CD8-positive, alpha-beta memory T cell (primary cell): ENCODE measurements at regions of chr10 and their contacts with region 1.

Region 1: DNA sequence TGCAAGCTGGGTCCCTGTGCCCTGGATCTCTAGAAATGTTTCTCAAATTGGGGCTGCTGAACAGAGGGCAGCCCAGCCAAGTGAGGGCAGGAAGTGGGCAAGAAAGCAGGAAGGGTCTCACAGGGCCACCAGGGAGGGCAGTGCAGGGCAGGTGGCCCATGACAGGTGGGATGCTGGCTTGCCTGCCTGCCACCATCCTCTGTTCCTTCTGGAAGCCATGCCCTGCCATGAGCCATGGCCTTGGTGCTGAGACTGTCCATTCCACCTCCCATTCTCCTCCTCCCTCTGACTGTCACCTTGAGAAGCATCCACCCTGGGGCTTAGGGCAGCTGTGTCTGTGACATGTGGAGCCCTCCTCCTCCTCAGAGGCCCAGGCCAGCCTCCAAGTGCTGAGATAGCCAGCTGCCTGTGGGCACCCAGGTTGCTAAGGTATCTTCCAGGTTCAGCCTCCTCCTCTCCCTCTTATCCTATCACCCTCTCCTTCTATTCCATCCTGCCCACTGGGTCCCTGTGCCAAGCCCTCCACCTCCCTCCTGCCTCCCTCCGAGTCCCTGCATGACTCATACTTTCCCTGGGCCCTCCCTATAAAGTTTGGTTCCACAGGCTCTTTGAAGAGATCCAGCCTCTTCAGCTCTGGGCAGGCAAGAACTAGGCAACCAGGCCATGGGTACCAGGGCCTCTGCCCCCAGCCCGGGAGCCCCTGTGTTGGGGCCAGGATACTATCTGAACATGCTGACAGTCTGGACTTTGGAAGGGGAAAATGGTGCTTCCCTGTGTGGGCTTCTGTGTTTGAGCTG is 1.3 kb downstream of the VSIR start:
- DNase-seq: peak in 2 of 5 donors; percentile 40 to 55
- H3K4me3 ChIP-seq: peak overlapping the region; percentile 94
- H3K4me3 Mint-ChIP-seq: peak overlapping the region; percentile 79 to 98 (median 92)
- H3K27ac ChIP-seq: peak overlapping the region; percentile 80
- H3K27ac Mint-ChIP-seq: peak overlapping the region; percentile 90 to 98 (median 94)
- H3K4me1 ChIP-seq: peaks cover 81% of the 10 kb centered on the region
- H3K4me1 Mint-ChIP-seq: peaks cover 76 to 88% (median 83%) of the 10 kb centered on the region in 3 donors
- H3K27me3 ChIP-seq: no peaks in the 10 kb centered on the region
- H3K27me3 Mint-ChIP-seq: no peaks in the 10 kb centered on the region

Region 2: GRCh38 chr10:70799124-70799523 is 972.9 kb before region 1 on chr10:
- CTCF ChIA-PET with region 1: no interaction called
- POLR2A ChIA-PET with region 1: no interaction called
- DNase-seq: no peak
- H3K4me3 ChIP-seq: no peak overlapping the region
- H3K4me3 Mint-ChIP-seq: no peak overlapping the region
- H3K27ac ChIP-seq: no peak overlapping the region
- H3K27ac Mint-ChIP-seq: no peak overlapping the region
- H3K4me1 ChIP-seq: no peaks in the 10 kb centered on the region
- H3K4me1 Mint-ChIP-seq: no peaks in the 10 kb centered on the region
- H3K27me3 ChIP-seq: no peaks in the 10 kb centered on the region
- H3K27me3 Mint-ChIP-seq: peaks cover 6 to 59% of the 10 kb centered on the region in 2 donors

Region 3: GRCh38 chr10:71696628-71697326 is 75.2 kb before region 1 on chr10:
- CTCF ChIA-PET with region 1: interaction called, 90 read pairs
- POLR2A ChIA-PET with region 1: interaction called, 6 read pairs
- DNase-seq: peak; percentile 35 to 75 (median 55)
- H3K4me3 ChIP-seq: no peak overlapping the region
- H3K4me3 Mint-ChIP-seq: peak overlapping the region in 5 of 7 donors; percentile 11 to 68 (median 28)
- H3K27ac ChIP-seq: no peak overlapping the region
- H3K27ac Mint-ChIP-seq: peak overlapping the region in 5 of 8 donors; percentile 51 to 88 (median 68)
- H3K4me1 ChIP-seq: peaks cover 54% of the 10 kb centered on the region
- H3K4me1 Mint-ChIP-seq: peaks cover 44 to 62% (median 52%) of the 10 kb centered on the region in 3 donors
- H3K27me3 ChIP-seq: no peaks in the 10 kb centered on the region
- H3K27me3 Mint-ChIP-seq: no peaks in the 10 kb centered on the region

Region 4: GRCh38 chr10:71713135-71714030 is 58.6 kb before region 1 on chr10:
- CTCF ChIA-PET with region 1: interaction called, 50 read pairs
- POLR2A ChIA-PET with region 1: interaction called, 5 read pairs
- DNase-seq: peak in 4 of 5 donors; percentile 27 to 62 (median 46)
- H3K4me3 ChIP-seq: peak overlapping the region; percentile 36
- H3K4me3 Mint-ChIP-seq: peak overlapping the region; percentile 73 to 90 (median 88)
- H3K27ac ChIP-seq: peak overlapping the region; percentile 66
- H3K27ac Mint-ChIP-seq: peak overlapping the region; percentile 97 to 100 (median 99)
- H3K4me1 ChIP-seq: peaks cover 61% of the 10 kb centered on the region
- H3K4me1 Mint-ChIP-seq: peaks cover 56 to 86% (median 62%) of the 10 kb centered on the region in 3 donors
- H3K27me3 ChIP-seq: no peaks in the 10 kb centered on the region
- H3K27me3 Mint-ChIP-seq: no peaks in the 10 kb centered on the region

Region 5: DNA sequence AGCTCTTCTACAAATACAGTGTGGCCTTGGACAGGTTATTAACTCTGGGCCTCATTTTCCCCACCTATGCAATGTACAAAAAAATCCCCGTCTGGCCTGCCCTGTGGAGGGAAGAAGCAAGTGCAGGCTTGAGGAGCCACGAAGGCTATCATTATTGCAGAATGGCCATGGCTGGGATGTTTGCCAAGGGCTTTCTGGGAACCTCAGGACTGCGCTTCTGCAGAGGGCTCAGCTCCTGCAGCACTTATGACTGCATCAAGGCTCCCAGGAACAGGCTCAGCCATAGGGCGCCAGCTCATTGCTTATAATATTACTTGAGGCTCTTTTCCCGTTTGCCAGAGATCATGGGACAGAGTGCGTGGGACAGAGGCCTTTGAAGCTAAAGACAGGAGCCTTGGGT is 31.9 kb before region 1 on chr10:
- CTCF ChIA-PET with region 1: interaction called, 27 read pairs
- POLR2A ChIA-PET with region 1: interaction called, 25 read pairs
- DNase-seq: no peak
- H3K4me3 ChIP-seq: no peak overlapping the region
- H3K4me3 Mint-ChIP-seq: peak overlapping the region in 5 of 7 donors; percentile 15 to 70 (median 51)
- H3K27ac ChIP-seq: no peak overlapping the region
- H3K27ac Mint-ChIP-seq: peak overlapping the region; percentile 76 to 99 (median 96)
- H3K4me1 ChIP-seq: peaks cover 100% of the 10 kb centered on the region
- H3K4me1 Mint-ChIP-seq: peaks cover 93 to 100% (median 99%) of the 10 kb centered on the region in 3 donors
- H3K27me3 ChIP-seq: no peaks in the 10 kb centered on the region
- H3K27me3 Mint-ChIP-seq: peaks cover 0 to 2% of the 10 kb centered on the region in 2 donors

Region 6: GRCh38 chr10:71756311-71757191 is 15.5 kb before region 1 on chr10:
- CTCF ChIA-PET with region 1: interaction called, 89 read pairs
- POLR2A ChIA-PET with region 1: interaction called, 24 read pairs
- DNase-seq: peak in 2 of 5 donors; percentile 68 to 83
- H3K4me3 ChIP-seq: peak overlapping the region; percentile 23
- H3K4me3 Mint-ChIP-seq: peak overlapping the region; percentile 56 to 76 (median 68)
- H3K27ac ChIP-seq: no peak overlapping the region
- H3K27ac Mint-ChIP-seq: peak overlapping the region; percentile 82 to 98 (median 93)
- H3K4me1 ChIP-seq: peaks cover 93% of the 10 kb centered on the region
- H3K4me1 Mint-ChIP-seq: peaks cover 74 to 89% (median 82%) of the 10 kb centered on the region in 3 donors
- H3K27me3 ChIP-seq: no peaks in the 10 kb centered on the region
- H3K27me3 Mint-ChIP-seq: no peaks in the 10 kb centered on the region

Region 7: GRCh38 chr10:71812016-71812912 is 40.2 kb after region 1 on chr10:
- CTCF ChIA-PET with region 1: interaction called, 11 read pairs
- POLR2A ChIA-PET with region 1: no interaction called
- DNase-seq: peak; percentile 61 to 80 (median 74)
- H3K4me3 ChIP-seq: no peak overlapping the region
- H3K4me3 Mint-ChIP-seq: no peak overlapping the region
- H3K27ac ChIP-seq: no peak overlapping the region
- H3K27ac Mint-ChIP-seq: peak overlapping the region in 1 of 8 donors; percentile 19
- H3K4me1 ChIP-seq: peaks cover 5% of the 10 kb centered on the region
- H3K4me1 Mint-ChIP-seq: no peaks in the 10 kb centered on the region
- H3K27me3 ChIP-seq: no peaks in the 10 kb centered on the region
- H3K27me3 Mint-ChIP-seq: no peaks in the 10 kb centered on the region